PC-9 (cell line): ENCODE measurements at regions of chr17 and their contacts with region 1.

Region 1: GRCh38 chr17:6843241-6843880 is 11.8 kb upstream of the TEKT1 start:
- DNase-seq: peak in 1 of 2 experiments; percentile 49
- H3K4me3 ChIP-seq: no peak overlapping the region
- H3K27ac ChIP-seq: no peak overlapping the region
- H3K4me1 ChIP-seq: no peaks in the 10 kb centered on the region
- H3K27me3 ChIP-seq: no peaks in the 10 kb centered on the region
- CTCF ChIP-seq: peak; percentile 78

Region 2: DNA sequence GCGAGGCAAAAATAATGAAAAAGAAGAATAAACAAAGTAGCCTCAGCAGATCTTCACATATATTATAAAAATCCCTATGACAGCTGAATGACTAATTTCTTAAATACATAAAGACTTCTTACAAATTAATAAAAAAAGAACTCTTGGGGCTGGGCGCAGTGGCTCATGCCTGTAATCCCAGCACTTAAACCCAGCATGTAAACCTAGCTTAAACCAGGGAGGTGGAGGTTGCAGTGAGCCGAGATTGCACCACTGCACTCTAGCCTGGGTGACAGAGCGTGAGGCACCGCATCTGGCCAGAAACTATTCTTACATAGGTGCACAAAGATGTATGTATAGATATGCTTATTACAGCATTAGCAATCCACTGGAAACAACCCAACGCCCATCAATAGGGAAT is 164.1 kb before region 1 on chr17:
- CTCF ChIA-PET with region 1: no interaction called
- POLR2A ChIA-PET with region 1: interaction called, 15 read pairs
- intact Hi-C with region 1: no loop called
- DNase-seq: no peak
- H3K4me3 ChIP-seq: no peak overlapping the region
- H3K27ac ChIP-seq: no peak overlapping the region
- H3K4me1 ChIP-seq: no peaks in the 10 kb centered on the region
- H3K27me3 ChIP-seq: no peaks in the 10 kb centered on the region
- CTCF ChIP-seq: no peak

Region 3: DNA sequence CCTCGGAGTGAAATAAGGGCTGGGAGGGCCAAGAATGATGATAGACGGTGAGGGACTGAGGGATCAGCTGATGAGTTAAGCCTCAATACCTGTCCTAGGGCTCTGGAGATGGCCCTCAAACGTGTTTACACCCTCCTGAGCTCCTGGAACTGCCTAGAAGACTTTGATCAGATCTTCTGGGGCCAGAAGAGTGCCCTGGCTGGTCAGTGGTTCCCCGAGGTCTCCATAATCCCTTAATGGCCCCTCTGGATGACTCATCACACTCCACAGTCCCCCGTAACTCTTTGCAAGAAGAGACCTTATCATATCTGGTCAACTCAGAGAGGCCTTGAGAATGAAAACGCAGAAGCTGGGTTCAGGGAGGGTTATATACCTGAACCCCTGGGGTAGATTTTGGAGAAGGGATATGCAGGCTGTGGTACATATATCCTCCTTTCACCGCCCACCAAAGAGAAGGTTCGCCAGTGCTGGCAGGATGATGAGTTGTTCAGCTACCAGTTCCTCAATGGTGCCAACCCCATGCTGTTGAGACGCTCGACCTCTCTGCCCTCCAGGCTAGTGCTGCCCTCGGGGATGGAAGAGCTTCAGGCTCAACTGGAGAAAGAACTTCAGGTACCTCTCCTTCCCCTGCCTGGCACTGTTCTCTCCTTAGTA is 155.6 kb after region 1 on chr17:
- CTCF ChIA-PET with region 1: interaction called, 9 read pairs
- POLR2A ChIA-PET with region 1: interaction called, 11 read pairs
- intact Hi-C with region 1: loop called (anchors 2 kb)
- DNase-seq: no peak
- H3K4me3 ChIP-seq: no peak overlapping the region
- H3K27ac ChIP-seq: no peak overlapping the region
- H3K4me1 ChIP-seq: no peaks in the 10 kb centered on the region
- H3K27me3 ChIP-seq: no peaks in the 10 kb centered on the region
- CTCF ChIP-seq: no peak